Right ventricle myocardium inferior (tissue), 1 donor: ENCODE measurements at regions of chr9 and their contacts with region 1.

Region 1: GRCh38 chr9:130243015-130243734 is 22.4 kb upstream of the HMCN2 start:
- DNase-seq: peak; percentile 90
- ATAC-seq: peak; percentile 67

Region 2: DNA sequence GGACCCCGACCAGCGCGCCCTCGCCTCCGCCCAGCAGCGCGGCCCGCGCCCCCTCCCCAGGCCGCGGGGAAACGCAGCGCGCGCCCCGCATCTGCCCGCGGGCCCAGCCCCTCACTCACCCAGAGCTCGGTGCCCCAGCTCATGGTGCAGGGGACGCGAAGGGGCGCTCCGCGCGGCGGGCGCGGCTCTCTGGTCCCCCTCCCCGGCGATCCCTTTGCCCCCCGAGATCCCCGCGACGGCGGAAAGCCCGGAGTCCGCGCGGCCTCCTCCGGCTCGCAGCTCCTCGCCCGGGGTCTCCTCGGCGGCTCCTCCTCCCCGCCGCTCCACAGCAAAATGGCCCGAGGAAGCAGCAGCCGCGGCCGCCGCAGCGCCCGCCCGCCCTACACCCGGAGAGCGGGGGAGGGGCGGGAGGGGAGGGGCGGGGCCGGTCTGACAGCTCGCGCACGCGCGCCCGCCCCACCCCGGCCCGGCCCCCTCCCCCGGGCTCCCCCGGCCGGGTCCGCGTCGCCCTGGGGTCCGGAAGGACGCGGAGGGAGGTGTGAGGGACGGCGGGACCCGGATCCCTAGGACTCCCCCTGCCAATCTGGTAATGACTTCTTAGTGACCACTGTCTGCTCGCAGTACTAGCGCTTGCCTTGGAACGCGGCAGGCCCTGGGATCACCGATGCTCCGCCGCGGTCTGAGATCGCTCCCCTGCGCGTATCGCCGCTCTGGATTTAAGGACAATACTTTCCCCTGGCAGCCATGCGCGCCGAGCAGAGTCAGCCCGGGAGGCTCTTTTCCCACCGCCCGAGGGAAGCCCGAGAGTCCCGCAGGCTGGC is 200.1 kb before region 1 on chr9 and contains the start of gene FNBP1:
- intact Hi-C with region 1: no loop called
- DNase-seq: peak; percentile 92
- ATAC-seq: peak; percentile 95
- total RNA-seq, gene FNBP1: 24.2 TPM

Region 3: GRCh38 chr9:130287736-130288135 is 44.6 kb after region 1 on chr9:
- intact Hi-C with region 1: no loop called
- DNase-seq: no peak
- ATAC-seq: no peak

Region 4: GRCh38 chr9:130343445-130343918 is 100.3 kb after region 1 on chr9:
- intact Hi-C with region 1: loop called (anchors 5 kb)
- DNase-seq: peak; percentile 56
- ATAC-seq: peak; percentile 26

Region 5: GRCh38 chr9:130433168-130433946 is 190.2 kb after region 1 on chr9:
- intact Hi-C with region 1: loop called (anchors 5 kb)
- DNase-seq: no peak
- ATAC-seq: peak; percentile 82